ENCODE measurements at regions of chr15 and their contacts with region 1.

Region 1: DNA sequence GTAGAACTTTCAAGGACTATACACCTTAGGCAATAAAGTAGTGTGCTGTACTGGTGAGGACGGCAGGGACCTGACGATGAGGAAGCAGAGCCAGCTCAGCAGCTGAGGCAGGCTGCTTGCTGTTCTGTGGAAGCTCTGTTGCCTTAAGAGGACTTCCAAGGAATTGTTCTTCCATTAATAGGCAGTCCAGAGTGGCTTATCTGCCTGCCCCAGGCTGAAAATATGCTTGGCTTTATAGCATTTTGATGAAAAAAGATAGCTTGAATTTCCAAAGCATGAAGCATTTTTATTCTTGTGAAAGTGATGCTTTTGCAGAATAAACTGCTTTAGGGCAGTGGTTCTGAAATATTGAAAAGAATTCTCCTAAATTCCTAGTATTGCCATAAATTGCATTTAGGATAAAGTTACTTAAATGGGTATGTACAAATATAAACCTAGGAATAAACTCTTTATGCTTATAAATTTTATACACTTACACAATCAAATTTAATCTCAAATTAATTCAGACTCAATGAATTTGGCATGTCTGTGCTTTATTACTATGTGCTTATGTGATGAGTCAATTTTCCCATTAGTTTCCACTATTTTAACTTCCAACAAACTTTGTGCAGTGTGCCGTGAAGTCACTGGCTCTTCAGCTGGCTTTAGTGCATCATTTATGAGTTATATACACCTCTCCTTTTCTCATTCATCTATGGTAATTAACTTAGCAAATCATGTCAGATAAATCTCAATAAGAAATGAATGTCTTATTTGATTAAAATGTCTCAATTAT is 231.0 kb upstream of the RASGRP1 start:
- DNase-seq: peak; percentile 14
- H3K4me3 ChIP-seq: no peak overlapping the region
- H3K27ac ChIP-seq: no peak overlapping the region
- H3K4me1 ChIP-seq: no peaks in the 10 kb centered on the region
- H3K27me3 ChIP-seq: peaks cover 0 to 4% of the 10 kb centered on the region in 2 experiments
- CTCF ChIP-seq: no peak
- POLR2A ChIP-seq: no peak

Region 2: GRCh38 chr15:38809621-38810020 is 14.0 kb after region 1 on chr15:
- CTCF ChIA-PET with region 1: no interaction called
- POLR2A ChIA-PET with region 1: no interaction called
- dilution Hi-C with region 1: no loop called
- intact Hi-C with region 1: loop called (anchors 1 kb)
- DNase-seq: no peak
- H3K4me3 ChIP-seq: no peak overlapping the region
- H3K27ac ChIP-seq: no peak overlapping the region
- H3K4me1 ChIP-seq: no peaks in the 10 kb centered on the region
- H3K27me3 ChIP-seq: no peaks in the 10 kb centered on the region
- CTCF ChIP-seq: no peak
- POLR2A ChIP-seq: no peak

Region 3: DNA sequence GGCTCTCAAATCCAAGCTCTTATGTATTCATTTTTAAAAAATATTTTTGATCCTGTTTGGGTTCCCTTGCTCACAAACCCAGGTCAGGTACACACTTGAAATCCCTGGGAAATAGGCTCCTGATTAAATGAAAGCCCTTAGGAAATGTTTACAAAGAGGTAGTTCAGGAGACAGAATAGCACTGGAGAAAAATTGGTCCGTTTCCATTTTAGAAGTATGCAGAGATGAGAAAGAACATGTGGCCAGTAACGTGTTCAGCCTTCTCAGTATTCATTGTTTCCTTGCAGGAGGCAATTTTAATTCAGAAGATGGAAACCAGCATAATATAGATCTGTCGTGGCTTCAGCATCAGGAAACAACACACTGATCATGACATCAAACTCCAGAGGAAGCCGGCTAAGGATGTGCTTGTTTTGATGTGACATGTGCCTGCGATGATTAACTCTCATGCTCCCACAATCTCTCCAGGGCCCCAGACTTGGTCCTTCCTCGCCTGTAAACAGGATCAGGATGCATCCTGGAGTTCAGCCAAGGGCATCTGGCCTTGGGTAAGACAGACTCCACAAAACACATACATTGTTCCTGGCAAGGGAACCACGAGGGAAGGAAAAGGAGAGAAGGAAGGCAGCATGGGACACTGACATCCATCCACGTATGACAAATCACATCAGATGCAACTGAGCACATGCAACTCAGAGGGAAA is 434.7 kb after region 1 on chr15:
- CTCF ChIA-PET with region 1: no interaction called
- POLR2A ChIA-PET with region 1: no interaction called
- dilution Hi-C with region 1: no loop called
- intact Hi-C with region 1: no loop called
- DNase-seq: peak; percentile 100
- H3K4me3 ChIP-seq: no peak overlapping the region
- H3K27ac ChIP-seq: peak overlapping the region; percentile 93
- H3K4me1 ChIP-seq: peaks cover 49% of the 10 kb centered on the region
- H3K27me3 ChIP-seq: no peaks in the 10 kb centered on the region
- CTCF ChIP-seq: no peak
- POLR2A ChIP-seq: no peak